CD14-positive monocyte (primary cell): ENCODE measurements at regions of chr2 and their contacts with region 1.

Region 1: DNA sequence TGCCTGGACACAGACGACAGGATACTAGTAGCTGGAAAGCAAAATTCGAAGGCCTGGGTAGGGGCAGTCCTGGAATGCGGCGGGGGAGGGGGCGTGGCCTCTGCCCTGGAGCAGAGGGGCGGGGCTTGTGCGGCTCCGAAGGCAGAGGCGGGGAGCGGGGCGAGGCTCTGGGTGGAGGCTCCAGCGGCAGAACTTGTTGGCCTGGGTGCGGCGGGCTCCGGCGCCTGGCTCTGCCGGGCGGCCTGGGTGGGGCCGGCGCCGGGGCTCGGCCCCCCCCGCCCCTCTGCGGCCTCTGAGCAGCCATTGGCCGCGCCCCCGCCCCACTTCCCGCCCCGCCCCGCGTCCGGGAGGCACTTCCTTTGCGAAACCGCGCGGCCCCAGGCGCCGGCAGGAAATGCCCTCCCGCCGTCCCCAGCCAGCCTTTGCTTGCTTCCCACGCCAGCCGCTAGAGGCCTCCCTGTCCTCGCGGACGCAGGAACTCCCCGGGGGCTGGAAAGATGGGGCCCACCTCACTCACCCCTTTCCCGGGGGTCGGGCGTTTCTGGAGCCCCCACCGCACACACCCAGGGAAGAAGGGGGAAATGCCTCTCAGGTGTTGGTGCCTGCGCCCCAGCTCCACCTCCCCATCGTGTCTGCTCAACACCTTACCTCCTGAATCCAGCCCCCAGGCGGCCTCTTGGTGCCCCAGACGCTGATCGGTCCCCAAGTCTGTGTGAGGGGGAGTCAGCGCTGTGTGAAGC is 6.7 kb downstream of the CTDSP1 start:
- DNase-seq: peak; percentile 90 to 94 (median 92)
- H3K4me3 ChIP-seq: peak overlapping the region; percentile 33 to 80 (median 34)
- H3K4me3 Mint-ChIP-seq: peak overlapping the region; percentile 70 to 90
- H3K27ac ChIP-seq: peak overlapping the region; percentile 72 to 87
- H3K27ac Mint-ChIP-seq: peak overlapping the region; percentile 90 to 98 (median 93)
- H3K4me1 ChIP-seq: peaks cover 68% of the 10 kb centered on the region in 2 donors
- H3K4me1 Mint-ChIP-seq: peaks cover 66% of the 10 kb centered on the region
- H3K27me3 ChIP-seq: no peaks in the 10 kb centered on the region
- H3K27me3 Mint-ChIP-seq: no peaks in the 10 kb centered on the region
- CTCF ChIP-seq: peak; percentile 75

Region 2: GRCh38 chr2:218216674-218217359 is 189.6 kb before region 1 on chr2 and contains the start of gene ARPC2:
- intact Hi-C with region 1: loop called in 1 of 2 experiments (anchors 2 kb)
- DNase-seq: peak; percentile 94
- H3K4me3 ChIP-seq: peak within 1 kb of the TSS; percentile 78 to 99 (median 99)
- H3K4me3 Mint-ChIP-seq: peak within 1 kb of the TSS; percentile 91 to 95
- H3K27ac ChIP-seq: peak within 1 kb of the TSS; percentile 88 to 97
- H3K27ac Mint-ChIP-seq: peak within 1 kb of the TSS; percentile 96 to 100 (median 99)
- H3K4me1 ChIP-seq: peaks cover 50 to 60% of the 10 kb centered on the region in 2 donors
- H3K4me1 Mint-ChIP-seq: peaks cover 50% of the 10 kb centered on the region
- H3K27me3 ChIP-seq: no peaks in the 10 kb centered on the region
- H3K27me3 Mint-ChIP-seq: no peaks in the 10 kb centered on the region
- CTCF ChIP-seq: no peak
- polyA plus RNA-seq, gene ARPC2: 640 to 1,227 (median 1,162) TPM

Region 3: GRCh38 chr2:218429571-218430301 is 23.4 kb after region 1 on chr2:
- intact Hi-C with region 1: no loop called
- DNase-seq: no peak
- H3K4me3 ChIP-seq: no peak overlapping the region
- H3K4me3 Mint-ChIP-seq: no peak overlapping the region
- H3K27ac ChIP-seq: no peak overlapping the region
- H3K27ac Mint-ChIP-seq: no peak overlapping the region
- H3K4me1 ChIP-seq: no peaks in the 10 kb centered on the region
- H3K4me1 Mint-ChIP-seq: no peaks in the 10 kb centered on the region
- H3K27me3 ChIP-seq: no peaks in the 10 kb centered on the region
- H3K27me3 Mint-ChIP-seq: peaks cover 3 to 6% (median 4%) of the 10 kb centered on the region in 3 donors
- CTCF ChIP-seq: no peak

Region 4: DNA sequence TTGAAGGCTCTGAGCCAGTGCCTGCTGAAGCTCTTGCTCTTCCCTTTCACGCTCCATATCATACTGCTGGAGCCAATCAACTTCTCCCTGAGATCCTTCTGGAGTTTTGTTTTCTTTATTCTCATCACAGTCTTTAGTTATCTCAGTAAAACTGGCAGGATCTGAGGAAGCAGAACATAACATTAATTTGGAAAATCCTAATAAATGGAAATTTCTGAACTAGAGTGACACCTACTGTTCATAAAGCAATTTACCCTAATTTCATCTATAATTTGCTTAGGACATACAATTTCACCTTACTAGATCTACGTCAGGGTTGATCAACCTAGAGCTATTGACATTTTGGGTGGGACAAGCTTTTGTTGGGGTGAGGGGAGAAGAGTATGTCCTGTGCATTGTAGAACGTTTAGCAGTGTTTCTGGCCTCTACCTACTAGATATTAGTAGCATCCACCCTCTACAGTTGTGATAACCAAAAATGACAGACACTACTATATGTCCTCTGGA is 59.7 kb after region 1 on chr2:
- intact Hi-C with region 1: loop called (anchors 5 to 10 kb)
- DNase-seq: peak in 2 of 3 donors; percentile 18 to 30
- H3K4me3 ChIP-seq: no peak overlapping the region
- H3K4me3 Mint-ChIP-seq: no peak overlapping the region
- H3K27ac ChIP-seq: peak overlapping the region in 1 of 2 donors; percentile 11
- H3K27ac Mint-ChIP-seq: peak overlapping the region in 1 of 7 donors; percentile 8
- H3K4me1 ChIP-seq: peaks cover 6 to 10% of the 10 kb centered on the region in 2 donors
- H3K4me1 Mint-ChIP-seq: peaks cover 13% of the 10 kb centered on the region
- H3K27me3 ChIP-seq: no peaks in the 10 kb centered on the region
- H3K27me3 Mint-ChIP-seq: no peaks in the 10 kb centered on the region
- CTCF ChIP-seq: peak; percentile 79

Region 5: DNA sequence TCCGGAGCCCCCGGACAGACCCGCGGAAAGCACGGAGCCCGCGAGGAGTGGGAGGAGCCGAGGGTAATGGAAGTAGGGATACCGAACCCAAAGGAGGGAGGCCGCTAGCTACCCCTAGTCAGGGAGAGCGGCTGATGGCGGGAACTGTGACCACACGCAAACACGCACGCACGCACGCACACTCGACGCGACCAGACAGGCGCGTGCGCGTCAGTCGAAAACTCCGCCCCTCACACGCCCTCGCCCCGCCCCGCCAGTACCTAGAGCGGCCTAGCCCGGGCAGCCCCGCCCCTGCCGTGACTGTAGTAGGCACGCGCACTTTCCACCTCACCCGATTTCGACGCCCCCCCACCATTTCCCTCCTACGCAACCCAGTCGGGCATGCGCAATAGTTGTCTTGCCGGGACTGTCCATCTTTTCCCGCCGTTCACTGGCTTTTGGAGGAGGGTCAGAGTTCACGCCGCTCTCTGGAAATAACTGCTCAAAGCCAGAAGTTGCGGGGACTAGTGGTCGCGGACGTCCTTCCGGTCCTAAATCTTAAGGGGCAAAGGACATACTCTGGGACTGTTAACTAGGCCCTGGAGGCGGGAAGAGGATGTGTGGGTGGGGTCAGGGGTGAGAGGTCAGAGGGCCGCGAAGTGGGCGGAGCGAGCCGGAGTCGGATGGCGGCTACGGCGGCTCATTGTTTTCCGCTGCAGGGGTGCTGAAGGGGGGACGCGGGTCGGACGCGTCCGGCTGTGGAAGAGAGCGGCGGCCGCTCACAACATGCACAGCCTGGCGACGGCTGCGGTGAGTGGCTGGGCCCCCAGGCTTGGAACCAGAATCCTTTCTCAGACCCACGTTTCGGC is 162.0 kb after region 1 on chr2 and contains the starts of genes CNOT9 and USP37:
- intact Hi-C with region 1: loop called in 1 of 2 experiments (anchors 10 kb)
- DNase-seq: peak; percentile 98 to 99 (median 99)
- H3K4me3 ChIP-seq: peak within 1 kb of the TSS; percentile 77 to 86 (median 77)
- H3K4me3 Mint-ChIP-seq: peak within 1 kb of the TSS; percentile 92 to 97
- H3K27ac ChIP-seq: peak within 1 kb of the TSS; percentile 92 to 96
- H3K27ac Mint-ChIP-seq: peak within 1 kb of the TSS; percentile 99 to 100 (median 99)
- H3K4me1 ChIP-seq: peaks cover 24 to 27% of the 10 kb centered on the region in 2 donors
- H3K4me1 Mint-ChIP-seq: peaks cover 45% of the 10 kb centered on the region
- H3K27me3 ChIP-seq: no peaks in the 10 kb centered on the region
- H3K27me3 Mint-ChIP-seq: no peaks in the 10 kb centered on the region
- CTCF ChIP-seq: no peak
- polyA plus RNA-seq, gene CNOT9: 14.5 to 21.5 (median 18.4) TPM
- polyA plus RNA-seq, gene USP37: 2.7 to 4.9 (median 2.7) TPM

Region 6: GRCh38 chr2:218671654-218672566 is 265.5 kb after region 1 on chr2 and contains the starts of genes RNF25 and STK36:
- intact Hi-C with region 1: loop called in 1 of 2 experiments (anchors 10 kb)
- DNase-seq: peak; percentile 54 to 75 (median 68)
- H3K4me3 ChIP-seq: peak within 1 kb of the TSS; percentile 55 to 98 (median 62)
- H3K4me3 Mint-ChIP-seq: peak within 1 kb of the TSS; percentile 96 to 99
- H3K27ac ChIP-seq: peak within 1 kb of the TSS; percentile 27 to 81
- H3K27ac Mint-ChIP-seq: peak within 1 kb of the TSS; percentile 86 to 97 (median 90)
- H3K4me1 ChIP-seq: peaks cover 16 to 20% of the 10 kb centered on the region in 2 donors
- H3K4me1 Mint-ChIP-seq: peaks cover 22% of the 10 kb centered on the region
- H3K27me3 ChIP-seq: no peaks in the 10 kb centered on the region
- H3K27me3 Mint-ChIP-seq: no peaks in the 10 kb centered on the region
- CTCF ChIP-seq: no peak
- polyA plus RNA-seq, gene RNF25: 10.7 to 20.3 (median 12.9) TPM
- polyA plus RNA-seq, gene STK36: 1.3 to 36.2 (median 3.3) TPM